Heart left ventricle (tissue), 16 donors: ENCODE measurements at regions of chr1 and their contacts with region 1.

Region 1: GRCh38 chr1:147177611-147178380 is 5.5 kb upstream of the PRKAB2 start:
- DNase-seq: peak in 2 of 5 donors; percentile 22 to 61
- ATAC-seq: peak in 2 of 4 donors; percentile 16 to 59
- H3K4me3 ChIP-seq: peak overlapping the region in 5 of 12 donors; percentile 5 to 37 (median 10)
- H3K27ac ChIP-seq: peak overlapping the region in 1 of 12 donors; percentile 13
- H3K4me1 ChIP-seq: peaks cover 0 to 18% (median 11%) of the 10 kb centered on the region in 12 donors
- H3K27me3 ChIP-seq: no peaks in the 10 kb centered on the region
- CTCF ChIP-seq: no peak
- POLR2A ChIP-seq: no peak

Region 2: GRCh38 chr1:147046189-147046862 is 131.5 kb before region 1 on chr1:
- intact Hi-C with region 1: no loop called
- DNase-seq: no peak
- ATAC-seq: no peak
- H3K4me3 ChIP-seq: no peak overlapping the region
- H3K27ac ChIP-seq: no peak overlapping the region
- H3K4me1 ChIP-seq: no peaks in the 10 kb centered on the region
- H3K27me3 ChIP-seq: peaks cover 0 to 24% (median 4%) of the 10 kb centered on the region in 9 donors
- CTCF ChIP-seq: no peak
- POLR2A ChIP-seq: no peak

Region 3: DNA sequence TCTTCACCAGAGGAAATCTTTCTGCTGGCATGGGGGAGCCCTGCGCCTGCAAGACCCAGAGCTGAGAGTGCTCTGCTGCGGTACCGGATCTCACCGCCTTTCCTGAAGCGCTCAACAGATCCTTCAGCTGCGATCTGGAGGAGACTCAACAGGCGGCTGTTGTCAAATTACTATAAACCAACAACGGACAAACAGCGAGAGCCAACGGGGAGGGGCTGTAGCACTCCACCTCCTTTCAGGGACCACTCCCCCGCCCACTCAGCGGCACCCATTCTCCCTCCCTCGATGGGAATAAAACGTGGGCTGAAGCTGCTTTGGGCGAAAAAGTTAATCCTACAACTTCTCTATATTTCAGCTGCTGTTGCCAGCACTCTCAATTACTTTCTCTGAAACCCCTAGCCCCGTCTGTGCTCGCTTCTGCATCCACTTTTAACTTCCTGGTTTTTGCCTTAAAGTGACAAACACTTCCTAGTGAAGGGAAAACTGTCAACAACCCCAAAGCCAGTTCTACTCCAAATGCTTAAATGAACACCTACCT is 47.5 kb after region 1 on chr1 and contains the start of gene FMO5:
- intact Hi-C with region 1: loop called in 3 of 10 experiments (anchors 5 kb)
- DNase-seq: peak; percentile 62 to 80 (median 70)
- ATAC-seq: peak; percentile 68 to 92 (median 91)
- H3K4me3 ChIP-seq: peak within 1 kb of the TSS; percentile 47 to 88 (median 68)
- H3K27ac ChIP-seq: peak within 1 kb of the TSS; percentile 44 to 88 (median 66)
- H3K4me1 ChIP-seq: peaks cover 0 to 12% (median 4%) of the 10 kb centered on the region in 12 donors
- H3K27me3 ChIP-seq: no peaks in the 10 kb centered on the region
- CTCF ChIP-seq: peak in 3 of 12 donors; percentile 10 to 36 (median 18)
- POLR2A ChIP-seq: peak in 1 of 2 donors; percentile 40
- total RNA-seq, gene FMO5: 0.74 to 17.0 (median 1.2) TPM